ENCODE measurements at regions of chr10 and their contacts with region 1.

Region 1: DNA sequence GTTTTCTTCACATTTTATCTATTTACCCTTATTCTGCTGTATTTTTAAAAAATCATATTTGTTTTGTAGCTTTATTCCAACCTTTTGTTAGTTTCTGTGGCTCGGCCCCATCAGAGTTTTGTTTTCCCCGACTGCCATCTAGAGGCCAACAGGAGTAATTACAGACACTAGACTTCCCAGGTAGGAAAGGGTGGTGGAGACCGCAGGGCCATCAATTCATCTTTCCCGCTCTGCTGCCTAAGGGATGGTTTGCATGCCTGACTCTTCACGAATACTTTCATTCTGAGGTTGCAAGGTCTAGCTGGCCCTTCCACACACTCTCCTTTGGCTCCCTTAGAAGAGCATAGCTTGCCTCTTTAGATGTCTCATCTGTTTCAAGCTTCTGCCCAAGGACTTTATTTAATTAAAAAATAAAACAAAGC is 38.3 kb downstream of the LYZL2 start:
- DNase-seq: peak; percentile 31
- ATAC-seq: peak; percentile 82
- H3K4me3 Mint-ChIP-seq: no peak overlapping the region
- H3K27ac Mint-ChIP-seq: no peak overlapping the region
- H3K4me1 Mint-ChIP-seq: no peaks in the 10 kb centered on the region
- H3K27me3 Mint-ChIP-seq: peaks cover 5% of the 10 kb centered on the region
- CTCF ChIP-seq: peak; percentile 74

Region 2: DNA sequence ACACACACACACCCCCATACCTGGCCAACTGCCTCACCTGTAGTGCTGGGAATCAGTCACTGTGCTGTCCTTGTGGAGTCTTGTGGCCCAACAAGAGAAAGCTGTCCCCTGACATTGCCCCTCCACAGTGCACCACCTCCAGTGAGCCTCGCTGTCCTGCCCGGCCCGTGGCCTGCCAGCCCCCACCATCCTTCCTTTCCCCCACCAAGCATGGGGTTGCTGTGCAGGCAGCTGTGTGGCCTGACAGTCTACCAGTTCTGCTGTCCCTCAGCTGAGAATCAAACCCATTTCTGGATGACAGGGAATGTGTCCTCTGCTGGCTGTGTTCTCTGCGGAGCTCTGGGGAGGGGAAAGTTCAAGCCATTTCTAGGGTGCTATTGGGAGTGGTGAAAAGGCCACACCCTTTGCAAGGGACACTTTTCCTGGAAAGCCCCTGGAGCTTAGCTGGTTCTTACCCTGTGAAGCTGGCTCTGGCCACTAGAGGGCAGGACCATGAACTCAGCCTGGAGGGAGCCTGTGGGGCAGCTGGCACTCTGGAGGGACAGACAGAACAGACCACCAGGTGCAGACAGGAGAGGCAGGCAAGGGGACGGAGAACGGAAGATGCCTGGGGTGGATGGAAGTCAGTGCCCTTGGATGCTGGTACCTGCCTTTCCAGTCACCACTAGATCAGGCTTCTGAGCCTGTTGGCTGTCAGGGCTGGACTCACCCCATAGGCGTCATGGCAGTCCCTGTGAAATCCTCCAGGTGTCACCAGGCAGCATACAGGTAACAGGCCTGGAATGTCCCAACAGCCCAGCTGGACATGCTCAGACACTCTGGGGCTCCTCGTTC is 231.7 kb before region 1 on chr10:
- CTCF ChIA-PET with region 1: interaction called, 32 read pairs
- POLR2A ChIA-PET with region 1: no interaction called
- intact Hi-C with region 1: no loop called
- DNase-seq: peak; percentile 81
- ATAC-seq: peak; percentile 95
- H3K4me3 Mint-ChIP-seq: no peak overlapping the region
- H3K27ac Mint-ChIP-seq: no peak overlapping the region
- H3K4me1 Mint-ChIP-seq: no peaks in the 10 kb centered on the region
- H3K27me3 Mint-ChIP-seq: peaks cover 1% of the 10 kb centered on the region
- CTCF ChIP-seq: peak; percentile 80

Region 3: GRCh38 chr10:30392564-30392990 is 198.7 kb before region 1 on chr10:
- CTCF ChIA-PET with region 1: interaction called, 129 read pairs
- POLR2A ChIA-PET with region 1: no interaction called
- intact Hi-C with region 1: loop called (anchors 5 kb)
- DNase-seq: peak; percentile 78
- ATAC-seq: peak; percentile 100
- H3K4me3 Mint-ChIP-seq: no peak overlapping the region
- H3K27ac Mint-ChIP-seq: no peak overlapping the region
- H3K4me1 Mint-ChIP-seq: peaks cover 3% of the 10 kb centered on the region
- H3K27me3 Mint-ChIP-seq: peaks cover 11% of the 10 kb centered on the region
- CTCF ChIP-seq: peak; percentile 88

Region 4: GRCh38 chr10:30534465-30535144 is 56.7 kb before region 1 on chr10:
- CTCF ChIA-PET with region 1: interaction called, 31 read pairs
- POLR2A ChIA-PET with region 1: interaction called, 3 read pairs
- intact Hi-C with region 1: no loop called
- DNase-seq: peak; percentile 87
- ATAC-seq: peak; percentile 55
- H3K4me3 Mint-ChIP-seq: no peak overlapping the region
- H3K27ac Mint-ChIP-seq: no peak overlapping the region
- H3K4me1 Mint-ChIP-seq: peaks cover 29% of the 10 kb centered on the region
- H3K27me3 Mint-ChIP-seq: no peaks in the 10 kb centered on the region
- CTCF ChIP-seq: peak; percentile 90

Region 5: DNA sequence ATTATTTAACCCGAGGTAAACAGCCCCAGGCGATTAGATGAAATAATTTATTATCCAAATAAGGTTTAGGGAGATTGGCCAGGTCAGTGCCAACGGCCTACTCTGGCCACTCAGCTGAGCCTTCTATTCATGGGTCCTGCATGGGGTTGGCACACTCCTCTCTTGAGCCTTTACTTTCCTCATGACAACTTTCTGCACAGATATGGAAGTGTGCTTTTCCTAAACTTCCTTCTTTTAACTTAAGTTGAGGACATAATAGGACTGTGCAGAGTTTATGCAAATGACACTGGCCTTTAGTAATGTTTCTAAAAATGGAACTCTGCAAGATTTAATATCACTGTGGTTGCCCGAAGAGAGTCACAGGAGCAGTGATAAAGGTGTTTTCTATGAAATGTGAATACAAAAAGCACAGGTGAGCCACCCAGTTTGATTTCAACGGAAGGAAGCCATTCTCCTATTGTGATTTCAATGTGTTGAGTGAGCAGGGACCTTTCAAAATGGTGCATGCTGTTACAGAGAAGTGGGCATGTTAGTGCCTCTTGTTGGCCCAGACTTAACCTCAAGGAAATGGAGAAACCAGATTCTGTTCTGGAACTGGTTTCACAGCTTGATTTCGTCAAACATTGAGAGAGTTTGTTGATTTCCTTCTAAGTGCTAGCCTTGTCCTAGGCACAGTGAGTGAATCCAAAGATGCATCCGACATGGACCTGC is 17.4 kb before region 1 on chr10:
- CTCF ChIA-PET with region 1: interaction called, 11 read pairs
- POLR2A ChIA-PET with region 1: no interaction called
- intact Hi-C with region 1: no loop called
- DNase-seq: no peak
- ATAC-seq: no peak
- H3K4me3 Mint-ChIP-seq: no peak overlapping the region
- H3K27ac Mint-ChIP-seq: no peak overlapping the region
- H3K4me1 Mint-ChIP-seq: no peaks in the 10 kb centered on the region
- H3K27me3 Mint-ChIP-seq: peaks cover 1% of the 10 kb centered on the region
- CTCF ChIP-seq: no peak

Region 6: DNA sequence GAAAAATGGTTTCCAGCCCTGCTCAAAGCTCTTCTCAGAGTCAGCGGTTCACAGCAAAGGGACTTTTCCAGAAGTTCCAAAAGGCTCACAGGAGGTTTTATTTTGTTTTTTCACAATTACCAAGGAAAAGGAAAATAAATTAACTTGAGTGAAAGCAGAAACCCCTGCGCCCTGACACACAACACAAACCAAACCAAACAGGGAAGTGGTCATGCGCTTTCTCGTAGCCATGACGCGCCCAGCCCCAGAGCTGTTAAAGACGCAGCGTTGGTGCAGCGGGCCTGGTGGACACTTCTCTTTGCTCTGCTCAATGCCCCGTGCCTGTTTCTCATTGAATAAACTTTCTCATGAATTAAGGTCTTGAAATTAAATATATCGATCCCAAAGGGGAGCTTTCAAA is 172.7 kb after region 1 on chr10:
- CTCF ChIA-PET with region 1: no interaction called
- POLR2A ChIA-PET with region 1: no interaction called
- intact Hi-C with region 1: no loop called
- DNase-seq: peak; percentile 32
- ATAC-seq: no peak
- H3K4me3 Mint-ChIP-seq: no peak overlapping the region
- H3K27ac Mint-ChIP-seq: no peak overlapping the region
- H3K4me1 Mint-ChIP-seq: peaks cover 11% of the 10 kb centered on the region
- H3K27me3 Mint-ChIP-seq: no peaks in the 10 kb centered on the region
- CTCF ChIP-seq: no peak